Uterus (tissue), 4 donors: ENCODE measurements at regions of chr5 and their contacts with region 1.

Region 1: GRCh38 chr5:141992349-141992963 is 20.4 kb downstream of the GNPDA1 start:
- DNase-seq: peak; percentile 70 to 80
- H3K4me3 ChIP-seq: no peak overlapping the region
- H3K27ac ChIP-seq: no peak overlapping the region
- H3K4me1 ChIP-seq: no peaks in the 10 kb centered on the region
- H3K27me3 ChIP-seq: no peaks in the 10 kb centered on the region
- CTCF ChIP-seq: peak; percentile 71 to 80 (median 74)
- POLR2A ChIP-seq: no peak

Region 2: DNA sequence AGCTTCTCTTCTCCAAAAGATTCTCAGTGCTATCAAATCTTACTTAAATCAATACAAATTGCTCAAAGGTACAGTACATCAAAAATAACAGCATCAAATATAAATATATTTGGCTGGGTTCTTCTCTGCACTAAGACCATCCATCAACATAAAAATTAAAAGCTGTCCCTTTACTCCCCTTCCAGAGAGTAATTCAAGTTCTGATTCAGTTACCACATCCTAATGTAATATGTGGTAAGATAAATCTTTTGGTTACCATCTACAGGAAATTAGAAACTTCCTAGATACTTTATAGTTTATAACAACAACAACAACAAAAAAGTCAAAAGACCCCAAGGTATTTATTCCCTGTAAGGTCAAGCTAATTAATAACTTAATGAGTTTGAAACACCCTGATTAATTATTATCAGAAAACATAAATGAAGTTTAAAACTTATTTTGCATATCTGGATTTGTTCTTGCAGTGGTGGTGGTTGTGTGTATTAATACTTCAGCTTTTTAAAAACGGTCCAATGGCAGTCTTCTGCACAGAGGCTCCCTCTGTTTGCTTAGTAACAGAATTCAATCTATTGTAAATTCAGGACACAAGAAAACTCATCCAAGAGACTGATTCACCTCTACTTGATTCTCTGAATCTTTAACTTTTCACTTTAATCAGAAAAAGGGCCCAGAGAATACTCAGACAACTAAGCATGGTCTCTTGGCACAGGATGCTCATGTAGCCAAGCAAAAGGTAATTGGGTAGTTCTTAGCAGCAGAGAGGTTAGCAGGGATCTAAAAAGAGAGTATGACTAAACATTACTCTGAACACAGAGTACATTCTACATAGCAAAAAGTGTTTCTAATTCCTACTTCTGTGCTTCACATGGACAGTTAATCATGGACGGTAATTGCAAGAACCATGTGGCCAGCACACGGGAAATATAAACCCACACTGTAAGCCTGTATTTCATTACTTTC is 393.8 kb before region 1 on chr5:
- intact Hi-C with region 1: no loop called
- DNase-seq: no peak
- H3K4me3 ChIP-seq: no peak overlapping the region
- H3K27ac ChIP-seq: no peak overlapping the region
- H3K4me1 ChIP-seq: no peaks in the 10 kb centered on the region
- H3K27me3 ChIP-seq: no peaks in the 10 kb centered on the region
- CTCF ChIP-seq: no peak
- POLR2A ChIP-seq: no peak

Region 3: GRCh38 chr5:142046191-142046590 is 53.7 kb after region 1 on chr5:
- intact Hi-C with region 1: no loop called
- DNase-seq: no peak
- H3K4me3 ChIP-seq: no peak overlapping the region
- H3K27ac ChIP-seq: no peak overlapping the region
- H3K4me1 ChIP-seq: no peaks in the 10 kb centered on the region
- H3K27me3 ChIP-seq: no peaks in the 10 kb centered on the region
- CTCF ChIP-seq: no peak
- POLR2A ChIP-seq: no peak

Region 4: GRCh38 chr5:142145106-142145900 is 152.8 kb after region 1 on chr5:
- intact Hi-C with region 1: loop called (anchors 5 kb)
- DNase-seq: peak; percentile 42 to 56
- H3K4me3 ChIP-seq: no peak overlapping the region
- H3K27ac ChIP-seq: no peak overlapping the region
- H3K4me1 ChIP-seq: no peaks in the 10 kb centered on the region
- H3K27me3 ChIP-seq: no peaks in the 10 kb centered on the region
- CTCF ChIP-seq: peak; percentile 46 to 60 (median 54)
- POLR2A ChIP-seq: no peak